ENCODE measurements at regions of chr6 and their contacts with region 1.

Region 1: DNA sequence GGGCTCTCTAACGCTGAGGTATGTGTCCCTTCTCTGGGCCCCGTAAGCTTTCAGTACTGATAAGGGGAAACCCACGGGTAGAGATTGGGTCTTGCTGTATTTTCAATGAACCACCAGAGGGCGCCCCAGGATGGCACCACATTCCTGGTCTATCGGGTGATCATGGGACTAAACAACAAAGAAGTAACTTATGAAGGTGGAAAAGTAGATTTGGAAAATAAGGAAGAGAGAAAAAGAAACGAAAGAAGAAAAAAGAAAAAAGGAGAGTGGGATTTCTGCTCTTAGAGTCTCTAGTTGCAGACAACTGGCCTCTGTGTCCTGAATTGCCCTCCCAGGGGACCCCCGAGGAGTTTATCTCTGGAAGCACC is 93.8 kb downstream of the GMPR start:
- DNase-seq: peak; percentile 78
- ATAC-seq: peak; percentile 99
- H3K4me3 ChIP-seq: no peak overlapping the region
- H3K27ac ChIP-seq: peak overlapping the region; percentile 13; the same call in 1 of the 2 replicates
- H3K4me1 ChIP-seq: peaks cover 19% of the 10 kb centered on the region
- H3K27me3 ChIP-seq: no peaks in the 10 kb centered on the region
- CTCF ChIP-seq: peak; percentile 77 to 95 (median 94); a peak in 5 of 6 replicates
- EP300 ChIP-seq: no peak
- POLR2A ChIP-seq: no peak
- RAD21 ChIP-seq: peak; percentile 99

Region 2: GRCh38 chr6:16305246-16305725 is 26.9 kb before region 1 on chr6:
- CTCF ChIA-PET with region 1: interaction called, 11 read pairs
- POLR2A ChIA-PET with region 1: no interaction called
- RAD21 ChIA-PET with region 1: interaction called, 7 read pairs
- SMC1A ChIA-PET with region 1: interaction called, 4 read pairs
- in situ Hi-C with region 1: no loop called
- intact Hi-C with region 1: no loop called
- DNase-seq: peak; percentile 83
- ATAC-seq: peak; percentile 90
- H3K4me3 ChIP-seq: peak overlapping the region; percentile 53; the same call in 1 of the 2 replicates
- H3K27ac ChIP-seq: peak overlapping the region; percentile 75
- H3K4me1 ChIP-seq: peaks cover 32% of the 10 kb centered on the region
- H3K27me3 ChIP-seq: no peaks in the 10 kb centered on the region
- CTCF ChIP-seq: no peak
- EP300 ChIP-seq: peak; percentile 83 to 88
- POLR2A ChIP-seq: no peak
- RAD21 ChIP-seq: no peak

Region 3: GRCh38 chr6:16409531-16410441 is 77.6 kb after region 1 on chr6:
- CTCF ChIA-PET with region 1: interaction called, 41 read pairs
- POLR2A ChIA-PET with region 1: no interaction called
- RAD21 ChIA-PET with region 1: interaction called, 12 read pairs
- SMC1A ChIA-PET with region 1: interaction called, 25 read pairs
- in situ Hi-C with region 1: no loop called
- intact Hi-C with region 1: loop called (anchors 2 kb)
- DNase-seq: no peak
- ATAC-seq: peak; percentile 40
- H3K4me3 ChIP-seq: no peak overlapping the region
- H3K27ac ChIP-seq: no peak overlapping the region
- H3K4me1 ChIP-seq: peaks cover 11% of the 10 kb centered on the region
- H3K27me3 ChIP-seq: no peaks in the 10 kb centered on the region
- CTCF ChIP-seq: peak; percentile 60 to 86 (median 83)
- EP300 ChIP-seq: no peak
- POLR2A ChIP-seq: no peak
- RAD21 ChIP-seq: peak; percentile 79

Region 4: DNA sequence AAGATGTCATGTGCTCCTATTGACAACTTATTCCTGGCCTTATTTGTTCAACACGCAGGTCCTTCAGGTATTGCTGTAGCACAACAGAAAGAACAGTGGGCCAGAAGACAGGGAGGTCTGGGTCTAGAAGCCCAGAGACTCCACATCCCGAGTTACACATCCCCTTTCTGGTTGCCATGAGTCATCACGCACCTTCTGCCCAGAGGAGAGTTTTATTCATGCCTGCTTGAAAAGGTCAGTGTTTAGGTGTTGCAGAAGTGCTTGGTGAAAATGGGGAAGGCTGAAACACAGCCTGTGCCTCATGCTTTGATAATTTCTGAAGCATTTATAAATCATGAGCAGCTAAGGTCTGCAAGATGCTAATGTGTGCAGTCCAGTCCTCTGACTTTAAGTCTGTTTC is 162.6 kb after region 1 on chr6:
- CTCF ChIA-PET with region 1: interaction called, 11 read pairs
- POLR2A ChIA-PET with region 1: interaction called, 4 read pairs
- RAD21 ChIA-PET with region 1: interaction called, 3 read pairs
- SMC1A ChIA-PET with region 1: interaction called, 8 read pairs
- in situ Hi-C with region 1: no loop called
- intact Hi-C with region 1: no loop called
- DNase-seq: peak; percentile 90
- ATAC-seq: peak; percentile 75
- H3K4me3 ChIP-seq: peak overlapping the region; percentile 3; the same call in 1 of the 2 replicates
- H3K27ac ChIP-seq: peak overlapping the region; percentile 85
- H3K4me1 ChIP-seq: peaks cover 60% of the 10 kb centered on the region
- H3K27me3 ChIP-seq: no peaks in the 10 kb centered on the region
- CTCF ChIP-seq: no peak
- EP300 ChIP-seq: peak in 1 of 2 experiments; percentile 87; a peak in 3 of 4 replicates
- POLR2A ChIP-seq: no peak
- RAD21 ChIP-seq: no peak

Region 5: GRCh38 chr6:16770701-16771569 is 438.8 kb after region 1 on chr6:
- CTCF ChIA-PET with region 1: interaction called, 115 read pairs
- POLR2A ChIA-PET with region 1: no interaction called
- RAD21 ChIA-PET with region 1: interaction called, 7 read pairs
- SMC1A ChIA-PET with region 1: interaction called, 12 read pairs
- in situ Hi-C with region 1: loop called (anchors 5 kb)
- intact Hi-C with region 1: no loop called
- DNase-seq: no peak
- ATAC-seq: peak; percentile 87
- H3K4me3 ChIP-seq: no peak overlapping the region
- H3K27ac ChIP-seq: no peak overlapping the region
- H3K4me1 ChIP-seq: no peaks in the 10 kb centered on the region; the same call in 1 of the 2 replicates
- H3K27me3 ChIP-seq: no peaks in the 10 kb centered on the region
- CTCF ChIP-seq: peak; percentile 89 to 98 (median 94)
- EP300 ChIP-seq: 0 out of 4 replicates have a peak, but pooled peaks of 1 of the 2 experiments have one; percentile 18
- POLR2A ChIP-seq: no peak
- RAD21 ChIP-seq: peak; percentile 72

Measured in GM12878 (cell line).